MCF 10A (cell line): ENCODE measurements at regions of chr12 and their contacts with region 1.

Region 1: DNA sequence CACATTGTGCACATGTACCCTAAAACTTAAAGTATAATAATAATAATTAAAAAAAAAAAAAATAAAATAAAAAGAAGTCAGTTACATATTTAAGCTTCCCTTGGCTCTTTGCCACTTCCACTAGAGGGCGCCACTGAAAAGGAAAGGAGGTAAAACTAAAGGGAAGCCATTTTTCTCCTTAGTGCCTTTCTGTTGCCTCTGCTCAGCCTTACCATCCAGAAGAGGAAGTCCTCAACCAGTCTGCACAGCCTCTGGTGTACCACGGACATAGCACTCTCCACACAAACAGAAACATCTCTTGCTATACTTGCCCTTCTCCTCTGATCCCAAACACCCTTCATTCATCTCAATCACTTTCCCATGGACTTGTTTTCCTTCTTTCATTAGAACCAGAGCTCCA is 169.0 kb upstream of the EEA1 start:
- DNase-seq: peak; percentile 59
- H3K4me3 Mint-ChIP-seq: no peak overlapping the region
- H3K27ac Mint-ChIP-seq: no peak overlapping the region
- H3K4me1 Mint-ChIP-seq: no peaks in the 10 kb centered on the region
- H3K27me3 Mint-ChIP-seq: no peaks in the 10 kb centered on the region
- CTCF ChIP-seq: peak; percentile 28

Region 2: GRCh38 chr12:93108985-93109384 is 10.9 kb after region 1 on chr12:
- CTCF ChIA-PET with region 1: interaction called, 19 read pairs
- POLR2A ChIA-PET with region 1: interaction called, 8 read pairs
- intact Hi-C with region 1: no loop called
- DNase-seq: no peak
- H3K4me3 Mint-ChIP-seq: no peak overlapping the region
- H3K27ac Mint-ChIP-seq: no peak overlapping the region
- H3K4me1 Mint-ChIP-seq: peaks cover 12% of the 10 kb centered on the region
- H3K27me3 Mint-ChIP-seq: no peaks in the 10 kb centered on the region
- CTCF ChIP-seq: no peak

Region 3: DNA sequence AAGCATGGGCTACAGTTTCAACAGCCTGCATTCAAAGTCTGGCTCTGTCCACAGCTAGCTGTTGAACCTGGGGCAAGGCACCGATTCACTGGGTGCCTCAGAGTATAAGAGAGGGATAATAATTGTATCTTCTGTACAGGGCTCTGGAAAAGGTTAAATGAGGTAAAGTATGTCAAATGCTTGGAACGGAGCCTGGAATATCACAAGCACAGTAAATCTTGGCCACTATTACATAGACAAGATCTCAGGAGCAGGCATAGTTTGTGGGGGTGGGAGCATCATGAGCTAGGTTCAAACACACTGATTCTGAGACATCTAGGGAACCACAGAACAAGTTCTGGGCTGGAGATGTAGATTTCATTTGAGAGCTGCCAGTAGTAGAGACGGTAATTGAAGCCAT is 76.0 kb after region 1 on chr12:
- CTCF ChIA-PET with region 1: no interaction called
- POLR2A ChIA-PET with region 1: no interaction called
- intact Hi-C with region 1: no loop called
- DNase-seq: peak; percentile 14
- H3K4me3 Mint-ChIP-seq: no peak overlapping the region
- H3K27ac Mint-ChIP-seq: no peak overlapping the region
- H3K4me1 Mint-ChIP-seq: no peaks in the 10 kb centered on the region
- H3K27me3 Mint-ChIP-seq: no peaks in the 10 kb centered on the region
- CTCF ChIP-seq: no peak

Region 4: DNA sequence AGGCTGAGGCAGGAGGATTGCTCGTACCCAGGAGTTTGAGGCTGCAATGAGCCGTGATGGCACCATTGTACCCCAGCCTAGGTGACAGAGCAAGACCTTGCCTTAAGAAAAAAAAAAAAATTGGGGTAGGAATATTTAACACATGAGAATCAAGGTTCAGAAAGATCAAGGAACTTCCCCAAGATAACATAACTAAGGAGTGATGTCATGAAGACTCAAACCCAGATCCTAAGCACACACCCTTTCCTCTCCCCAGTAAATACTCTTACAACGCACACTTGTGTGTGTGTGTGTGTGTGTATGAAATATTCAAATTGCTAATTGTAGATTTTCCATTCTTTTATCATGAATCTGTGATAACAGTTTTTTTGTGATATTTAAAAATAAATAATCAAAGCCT is 189.1 kb after region 1 on chr12:
- CTCF ChIA-PET with region 1: no interaction called
- POLR2A ChIA-PET with region 1: no interaction called
- intact Hi-C with region 1: no loop called
- DNase-seq: no peak
- H3K4me3 Mint-ChIP-seq: no peak overlapping the region
- H3K27ac Mint-ChIP-seq: no peak overlapping the region
- H3K4me1 Mint-ChIP-seq: no peaks in the 10 kb centered on the region
- H3K27me3 Mint-ChIP-seq: no peaks in the 10 kb centered on the region
- CTCF ChIP-seq: no peak

Region 5: GRCh38 chr12:93526786-93527428 is 428.8 kb after region 1 on chr12:
- CTCF ChIA-PET with region 1: no interaction called
- POLR2A ChIA-PET with region 1: no interaction called
- intact Hi-C with region 1: no loop called
- DNase-seq: peak; percentile 67
- H3K4me3 Mint-ChIP-seq: no peak overlapping the region
- H3K27ac Mint-ChIP-seq: no peak overlapping the region
- H3K4me1 Mint-ChIP-seq: peaks cover 10% of the 10 kb centered on the region
- H3K27me3 Mint-ChIP-seq: no peaks in the 10 kb centered on the region
- CTCF ChIP-seq: no peak